GM10248 (cell line): ENCODE measurements at regions of chr1 and their contacts with region 1.

Region 1: GRCh38 chr1:211654838-211655787 is 20.3 kb downstream of the NEK2 start:
- DNase-seq: peak; percentile 79
- CTCF ChIP-seq: peak; percentile 91

Region 2: GRCh38 chr1:211469938-211470529 is 185.1 kb before region 1 on chr1:
- CTCF ChIA-PET with region 1: interaction called, 22 read pairs
- POLR2A ChIA-PET with region 1: no interaction called
- DNase-seq: peak; percentile 53
- CTCF ChIP-seq: peak; percentile 73

Region 3: DNA sequence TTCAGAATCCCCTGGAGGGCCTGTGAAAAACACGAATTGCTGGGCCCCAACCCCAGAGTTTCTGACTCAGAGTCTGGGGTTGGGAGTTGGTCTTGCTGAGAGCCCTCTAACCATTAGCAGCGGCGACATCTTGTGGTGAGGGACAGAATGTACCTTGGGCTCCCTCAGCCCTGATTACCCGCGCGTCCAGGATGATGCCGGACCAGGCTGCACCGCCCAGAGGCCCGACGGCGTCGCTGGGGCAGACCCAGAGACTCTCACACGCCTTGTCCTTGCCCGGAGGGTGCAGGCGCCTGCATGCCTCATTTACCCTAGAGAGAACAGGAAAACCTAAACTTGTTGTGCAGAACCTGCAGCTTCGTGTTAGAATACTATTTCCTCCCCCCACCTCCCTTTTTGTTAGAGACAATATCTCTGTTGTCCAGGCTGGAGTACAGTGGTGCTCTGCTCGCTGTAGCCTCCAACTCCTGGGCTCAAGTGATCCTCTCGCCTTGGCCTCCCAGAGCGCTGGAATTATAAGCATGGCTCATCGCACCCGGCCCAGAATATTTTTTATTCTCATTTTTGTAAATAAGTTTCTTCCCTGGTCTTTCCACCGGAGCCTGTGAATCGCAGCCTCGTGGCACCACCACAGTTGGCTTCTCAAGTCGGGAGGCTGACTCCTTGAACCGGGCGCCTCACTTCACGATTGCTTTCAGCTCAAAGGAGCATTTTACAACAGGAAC is 140.9 kb before region 1 on chr1:
- CTCF ChIA-PET with region 1: interaction called, 130 read pairs
- POLR2A ChIA-PET with region 1: no interaction called
- DNase-seq: peak; percentile 91
- CTCF ChIP-seq: peak; percentile 74

Region 4: DNA sequence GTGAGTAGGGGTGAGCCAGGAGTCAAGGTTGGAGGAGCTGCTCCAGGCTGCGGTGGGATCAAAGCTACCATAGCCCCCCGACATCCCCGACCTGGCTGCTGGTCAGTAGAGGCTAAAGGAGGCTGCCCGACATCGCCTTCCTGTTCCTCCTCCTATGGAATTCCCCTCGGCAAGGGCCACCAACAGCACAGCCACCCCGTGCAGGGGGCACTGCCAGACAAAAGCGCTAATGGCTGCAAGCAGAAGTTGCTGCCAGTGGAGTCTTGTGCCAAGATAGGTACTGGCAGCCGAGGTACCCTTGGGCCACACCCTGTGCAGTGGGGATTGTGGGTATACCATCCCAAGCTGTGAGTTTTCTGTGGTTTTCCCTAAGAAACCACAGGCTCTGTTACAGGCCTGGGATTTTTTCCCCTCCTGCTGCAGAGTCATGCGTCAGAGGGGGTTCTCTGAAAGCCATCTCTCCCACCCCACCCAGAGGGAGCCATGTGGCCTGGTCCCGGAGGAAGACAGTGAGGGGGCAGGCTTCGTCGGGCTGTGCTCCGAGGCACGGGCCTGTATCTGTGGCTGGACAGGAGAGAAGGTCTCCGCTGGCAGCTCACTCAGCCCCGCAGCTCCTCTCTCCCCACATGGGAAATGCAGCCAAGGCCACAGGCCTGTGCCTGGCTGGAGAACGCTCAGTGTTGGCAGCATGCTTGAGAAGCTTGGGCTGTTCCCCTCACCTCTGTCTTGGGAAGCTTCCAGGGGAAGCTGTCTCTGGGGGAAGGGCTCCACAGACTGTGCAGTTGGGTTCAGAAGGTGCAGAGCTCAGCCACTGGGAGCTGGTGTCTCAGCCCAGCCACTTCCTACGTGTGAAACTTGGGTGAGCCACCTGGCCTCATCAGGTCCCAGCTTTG is 22.2 kb before region 1 on chr1:
- CTCF ChIA-PET with region 1: interaction called, 18 read pairs
- POLR2A ChIA-PET with region 1: interaction called, 3 read pairs
- DNase-seq: no peak
- CTCF ChIP-seq: no peak

Region 5: DNA sequence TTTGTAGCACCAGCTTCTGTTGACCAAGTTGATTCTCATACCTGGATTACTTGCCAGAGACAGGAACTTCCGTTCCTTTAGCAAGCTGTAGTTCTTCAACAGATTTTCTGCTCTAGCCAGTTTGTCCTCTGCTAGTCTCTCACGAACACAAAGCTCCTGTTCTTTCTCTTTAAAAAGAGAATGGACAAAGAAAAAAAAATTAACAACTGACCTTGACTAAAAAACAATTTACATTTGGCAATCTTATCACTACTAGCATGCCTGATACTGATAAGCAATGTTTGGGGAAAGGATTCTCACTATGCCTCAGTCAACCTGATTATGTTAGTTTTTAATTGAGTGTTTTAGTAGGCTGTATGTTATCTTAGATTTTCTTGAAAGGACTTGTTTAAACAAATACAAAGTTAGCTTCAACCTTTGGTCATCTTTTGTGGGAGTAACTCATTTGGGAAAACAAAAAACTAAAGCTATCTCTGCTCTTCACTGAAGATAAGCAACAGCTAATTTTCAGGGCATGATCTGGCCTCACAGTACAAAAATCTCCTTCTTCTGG is 12.0 kb after region 1 on chr1:
- CTCF ChIA-PET with region 1: interaction called, 22 read pairs
- POLR2A ChIA-PET with region 1: no interaction called
- DNase-seq: no peak
- CTCF ChIP-seq: no peak

Region 6: DNA sequence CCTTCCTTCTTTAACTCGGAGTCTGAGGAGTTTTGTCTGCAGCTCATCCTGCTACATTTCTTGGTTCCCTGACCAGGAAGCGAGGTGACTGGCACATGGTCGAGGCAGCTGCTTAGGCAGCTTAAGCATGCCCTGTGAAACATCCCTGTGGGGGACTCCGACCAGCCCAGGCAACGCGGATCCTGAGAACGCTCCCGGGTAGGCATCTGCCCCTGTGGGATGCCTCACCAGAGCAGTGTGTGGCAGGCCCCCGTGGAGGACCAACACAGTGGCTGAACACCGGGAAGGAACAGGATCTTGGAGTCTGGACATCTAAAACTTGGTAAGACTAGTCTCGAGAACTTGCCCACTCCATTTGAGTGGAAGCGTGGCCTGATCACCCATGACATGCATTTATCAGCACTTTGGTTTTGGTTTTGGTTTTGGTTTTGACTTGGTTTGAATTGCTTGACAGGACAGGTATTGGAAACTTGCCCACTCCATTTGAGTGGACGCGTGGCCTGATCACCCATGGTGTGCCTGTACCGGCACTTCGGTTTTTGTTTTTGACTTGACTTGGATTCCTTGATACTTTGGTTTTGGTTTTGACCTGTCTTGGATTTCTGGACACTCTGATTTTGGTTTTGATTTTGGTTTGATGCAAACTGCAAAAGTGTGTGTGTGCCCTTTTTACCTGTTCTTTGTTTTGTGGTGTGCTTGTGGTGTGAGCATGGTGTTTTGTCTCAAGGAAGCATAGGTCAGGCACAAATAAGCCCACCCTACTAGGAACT is 32.5 kb after region 1 on chr1:
- CTCF ChIA-PET with region 1: no interaction called
- POLR2A ChIA-PET with region 1: no interaction called
- DNase-seq: no peak
- CTCF ChIP-seq: no peak